A673 (cell line): ENCODE measurements at regions of chr19 and their contacts with region 1.

Region 1: DNA sequence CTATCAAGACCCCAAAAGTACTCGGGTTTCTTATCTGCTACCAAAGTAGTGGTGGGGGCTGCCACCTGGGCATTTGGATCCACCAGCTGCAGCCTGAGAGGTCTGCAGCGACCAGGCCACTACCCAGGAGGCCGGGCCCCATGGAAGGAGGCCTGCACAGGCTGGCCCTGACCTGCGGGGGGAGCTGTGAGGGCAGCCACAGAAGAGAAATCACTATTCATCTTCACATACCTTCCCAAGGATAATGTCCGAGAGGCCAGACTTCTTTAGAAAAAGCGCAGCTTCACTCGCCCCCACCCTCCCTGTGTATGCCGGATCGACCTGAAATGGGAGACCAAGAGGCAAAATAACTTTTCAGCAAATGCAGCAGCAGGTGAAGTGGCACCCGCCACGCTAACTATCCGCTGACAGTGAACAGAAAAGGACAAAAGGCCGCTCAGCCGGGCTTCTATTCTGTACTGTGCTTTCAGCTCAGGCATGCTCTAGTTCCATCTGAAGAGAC is 30.1 kb downstream of the EPS15L1 start:
- DNase-seq: peak; percentile 37
- H3K4me3 ChIP-seq: no peak overlapping the region
- H3K27ac ChIP-seq: no peak overlapping the region
- H3K4me1 ChIP-seq: peaks cover 9% of the 10 kb centered on the region
- H3K27me3 ChIP-seq: no peaks in the 10 kb centered on the region
- CTCF ChIP-seq: peak; percentile 74

Region 2: DNA sequence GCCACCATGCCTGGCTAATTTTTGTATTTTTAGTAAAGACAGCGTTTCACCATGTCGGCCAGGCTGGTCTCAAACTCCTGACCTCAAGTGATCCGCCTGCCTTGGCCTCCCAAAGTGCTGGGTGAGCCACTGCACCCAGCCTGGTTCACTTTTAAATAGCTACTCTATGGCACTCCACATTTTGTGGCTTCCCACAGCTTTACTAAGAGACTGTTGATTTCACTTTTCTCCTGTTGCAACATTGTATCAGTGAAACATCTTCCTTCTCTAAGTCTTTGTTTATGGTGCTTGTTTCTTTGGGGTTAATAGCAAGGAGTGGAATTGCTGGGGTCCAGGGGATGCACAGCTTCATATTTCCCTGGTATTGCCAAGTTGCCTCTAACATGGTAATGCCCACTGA is 231.5 kb after region 1 on chr19:
- CTCF ChIA-PET with region 1: interaction called, 17 read pairs
- POLR2A ChIA-PET with region 1: no interaction called
- intact Hi-C with region 1: no loop called
- DNase-seq: no peak
- H3K4me3 ChIP-seq: no peak overlapping the region
- H3K27ac ChIP-seq: no peak overlapping the region
- H3K4me1 ChIP-seq: no peaks in the 10 kb centered on the region
- H3K27me3 ChIP-seq: no peaks in the 10 kb centered on the region
- CTCF ChIP-seq: no peak